A549 (cell line): ENCODE measurements at regions of chr21 and their contacts with region 1.

Region 1: GRCh38 chr21:31885146-31885545 is 12.3 kb downstream of the HUNK start:
- DNase-seq: no peak
- ATAC-seq: no peak
- H3K4me3 ChIP-seq: no peak overlapping the region
- H3K27ac ChIP-seq: no peak overlapping the region
- H3K4me1 ChIP-seq: peaks cover 16% of the 10 kb centered on the region
- CTCF ChIP-seq: no peak
- EP300 ChIP-seq: no peak
- POLR2A ChIP-seq: no peak
- RAD21 ChIP-seq: no peak

Region 2: GRCh38 chr21:31686272-31686915 is 198.8 kb before region 1 on chr21:
- CTCF ChIA-PET with region 1: no interaction called
- POLR2A ChIA-PET with region 1: no interaction called
- DNase-seq: no peak
- ATAC-seq: no peak
- H3K4me3 ChIP-seq: no peak overlapping the region
- H3K27ac ChIP-seq: no peak overlapping the region
- H3K4me1 ChIP-seq: no peaks in the 10 kb centered on the region
- CTCF ChIP-seq: no peak
- EP300 ChIP-seq: no peak
- POLR2A ChIP-seq: no peak
- RAD21 ChIP-seq: no peak

Region 3: DNA sequence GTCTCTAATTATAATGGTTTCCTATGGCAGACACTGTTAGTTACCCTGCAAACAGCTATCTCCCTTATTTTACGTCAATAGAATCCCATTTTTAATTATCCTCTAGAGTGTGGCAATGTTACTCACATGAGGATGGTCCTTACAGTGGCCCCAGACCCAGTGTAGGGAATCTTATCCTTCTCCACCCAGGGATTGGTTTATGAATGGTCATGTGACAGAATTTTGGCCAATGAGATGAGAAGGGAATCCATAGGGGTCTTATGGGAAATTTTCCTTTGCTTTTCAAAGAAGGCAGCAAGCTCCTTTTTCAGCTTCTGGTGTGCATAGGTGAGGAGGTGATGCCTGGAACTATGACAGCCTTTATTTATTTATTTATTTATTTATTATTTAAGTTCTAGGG is 71.3 kb before region 1 on chr21:
- CTCF ChIA-PET with region 1: no interaction called
- POLR2A ChIA-PET with region 1: no interaction called
- DNase-seq: no peak
- ATAC-seq: no peak
- H3K4me3 ChIP-seq: no peak overlapping the region
- H3K27ac ChIP-seq: no peak overlapping the region
- H3K4me1 ChIP-seq: no peaks in the 10 kb centered on the region
- CTCF ChIP-seq: no peak
- EP300 ChIP-seq: no peak
- POLR2A ChIP-seq: no peak
- RAD21 ChIP-seq: no peak

Region 4: GRCh38 chr21:31873696-31874599 is 11.2 kb before region 1 on chr21:
- CTCF ChIA-PET with region 1: interaction called, 14 read pairs
- POLR2A ChIA-PET with region 1: no interaction called
- DNase-seq: peak; percentile 32 to 36
- ATAC-seq: peak; percentile 71 to 89
- H3K4me3 ChIP-seq: peak overlapping the region; percentile 74
- H3K27ac ChIP-seq: peak overlapping the region; percentile 74 to 90
- H3K4me1 ChIP-seq: no peaks in the 10 kb centered on the region
- CTCF ChIP-seq: peak; percentile 60
- EP300 ChIP-seq: no peak
- POLR2A ChIP-seq: no peak
- RAD21 ChIP-seq: peak in 1 of 2 experiments; percentile 60; a peak in 3 of 5 replicates